Activated CD4-positive, alpha-beta T cell treated with anti-CD3 and anti-CD28 coated beads for 36 hours (primary cell): ENCODE measurements at regions of chr18 and their contacts with region 1.

Region 1: GRCh38 chr18:62982600-62983251 is 267.4 kb downstream of the PHLPP1 start:
- DNase-seq: peak; percentile 74
- ATAC-seq: peak; percentile 72
- H3K4me3 Mint-ChIP-seq: no peak overlapping the region
- H3K27ac Mint-ChIP-seq: no peak overlapping the region
- H3K4me1 Mint-ChIP-seq: peaks cover 3% of the 10 kb centered on the region
- H3K27me3 Mint-ChIP-seq: no peaks in the 10 kb centered on the region

Region 2: DNA sequence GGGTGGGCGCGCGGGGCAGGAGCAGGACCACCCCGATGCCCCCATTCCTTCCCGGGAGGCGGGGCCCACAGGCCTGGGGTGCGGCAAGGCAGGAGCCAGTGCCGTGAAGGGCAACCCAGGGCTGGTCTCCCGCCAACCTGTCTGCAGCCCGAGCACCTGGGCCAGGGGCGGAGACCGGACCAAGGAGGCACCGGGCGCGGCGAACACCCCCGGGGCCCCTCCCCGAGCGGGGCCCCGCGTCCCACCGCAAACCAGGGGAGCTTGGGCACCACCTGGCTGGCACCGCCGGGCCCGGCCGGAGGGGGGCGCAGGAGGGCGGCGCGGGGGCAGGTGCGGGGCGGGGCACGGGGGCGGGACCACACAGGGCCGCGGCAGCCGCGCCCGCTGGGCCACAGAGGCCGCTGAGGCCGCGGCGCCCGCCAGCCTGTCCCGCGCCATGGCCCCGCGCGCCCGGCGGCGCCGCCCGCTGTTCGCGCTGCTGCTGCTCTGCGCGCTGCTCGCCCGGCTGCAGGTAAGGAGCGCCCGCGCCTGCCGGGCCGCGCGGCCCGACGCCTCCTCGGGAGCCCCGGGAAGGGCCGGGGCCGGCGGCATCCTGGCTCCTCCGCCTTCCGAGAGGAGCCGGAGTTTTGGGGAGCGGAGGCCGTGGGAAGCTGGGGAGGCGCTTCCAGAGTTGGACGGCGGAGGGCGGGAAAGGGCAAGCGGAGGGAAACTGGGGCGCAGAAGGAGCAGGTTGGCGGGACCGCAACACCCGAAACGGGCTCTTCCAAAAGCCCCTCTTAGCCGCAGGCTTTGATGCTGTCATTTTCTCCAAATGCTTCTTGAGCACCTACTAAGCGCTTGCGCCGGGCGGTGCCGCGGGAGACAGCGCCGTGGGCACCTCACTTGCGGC is 657.6 kb before region 1 on chr18 and contains the start of gene TNFRSF11A:
- CTCF ChIA-PET with region 1: no interaction called
- POLR2A ChIA-PET with region 1: no interaction called
- intact Hi-C with region 1: loop called in 1 of 2 experiments (anchors 10 kb)
- DNase-seq: peak; percentile 85
- ATAC-seq: peak; percentile 77
- H3K4me3 Mint-ChIP-seq: peak within 1 kb of the TSS; percentile 78
- H3K27ac Mint-ChIP-seq: peak within 1 kb of the TSS; percentile 64
- H3K4me1 Mint-ChIP-seq: peaks cover 29% of the 10 kb centered on the region
- H3K27me3 Mint-ChIP-seq: peaks cover 70% of the 10 kb centered on the region
- total RNA-seq, gene TNFRSF11A: 6.9 to 9.3 TPM

Region 3: GRCh38 chr18:62452280-62452831 is 530.4 kb before region 1 on chr18:
- CTCF ChIA-PET with region 1: no interaction called
- POLR2A ChIA-PET with region 1: no interaction called
- intact Hi-C with region 1: no loop called
- DNase-seq: peak; percentile 58
- ATAC-seq: peak; percentile 78
- H3K4me3 Mint-ChIP-seq: no peak overlapping the region
- H3K27ac Mint-ChIP-seq: no peak overlapping the region
- H3K4me1 Mint-ChIP-seq: peaks cover 20% of the 10 kb centered on the region
- H3K27me3 Mint-ChIP-seq: peaks cover 9% of the 10 kb centered on the region

Region 4: GRCh38 chr18:62637807-62638687 is 344.7 kb before region 1 on chr18:
- CTCF ChIA-PET with region 1: interaction called, 31 read pairs
- POLR2A ChIA-PET with region 1: no interaction called
- intact Hi-C with region 1: loop called (anchors 1 kb)
- DNase-seq: peak; percentile 77
- ATAC-seq: peak; percentile 83
- H3K4me3 Mint-ChIP-seq: no peak overlapping the region
- H3K27ac Mint-ChIP-seq: no peak overlapping the region
- H3K4me1 Mint-ChIP-seq: peaks cover 4% of the 10 kb centered on the region
- H3K27me3 Mint-ChIP-seq: peaks cover 13% of the 10 kb centered on the region

Region 5: DNA sequence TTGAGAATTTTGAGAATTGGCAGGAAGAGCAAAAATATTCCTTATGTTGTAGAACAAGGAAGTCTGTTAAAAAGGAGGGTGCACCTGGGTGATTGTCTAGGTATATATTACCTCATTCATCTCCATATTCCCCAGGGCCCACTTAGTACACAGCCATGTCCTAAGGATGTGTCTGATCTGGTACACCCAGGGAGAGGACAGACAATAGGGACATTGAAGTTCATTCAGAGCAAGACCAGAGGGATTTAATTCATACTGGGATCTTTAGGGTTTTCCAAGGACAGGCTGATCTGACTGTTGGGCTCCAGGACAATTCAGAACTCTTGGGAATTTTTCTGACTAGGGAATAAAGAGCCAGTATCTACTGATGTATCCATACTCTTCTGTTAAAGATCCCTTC is 155.3 kb before region 1 on chr18:
- CTCF ChIA-PET with region 1: no interaction called
- POLR2A ChIA-PET with region 1: no interaction called
- intact Hi-C with region 1: no loop called
- DNase-seq: no peak
- ATAC-seq: no peak
- H3K4me3 Mint-ChIP-seq: no peak overlapping the region
- H3K27ac Mint-ChIP-seq: no peak overlapping the region
- H3K4me1 Mint-ChIP-seq: peaks cover 7% of the 10 kb centered on the region
- H3K27me3 Mint-ChIP-seq: no peaks in the 10 kb centered on the region

Region 6: DNA sequence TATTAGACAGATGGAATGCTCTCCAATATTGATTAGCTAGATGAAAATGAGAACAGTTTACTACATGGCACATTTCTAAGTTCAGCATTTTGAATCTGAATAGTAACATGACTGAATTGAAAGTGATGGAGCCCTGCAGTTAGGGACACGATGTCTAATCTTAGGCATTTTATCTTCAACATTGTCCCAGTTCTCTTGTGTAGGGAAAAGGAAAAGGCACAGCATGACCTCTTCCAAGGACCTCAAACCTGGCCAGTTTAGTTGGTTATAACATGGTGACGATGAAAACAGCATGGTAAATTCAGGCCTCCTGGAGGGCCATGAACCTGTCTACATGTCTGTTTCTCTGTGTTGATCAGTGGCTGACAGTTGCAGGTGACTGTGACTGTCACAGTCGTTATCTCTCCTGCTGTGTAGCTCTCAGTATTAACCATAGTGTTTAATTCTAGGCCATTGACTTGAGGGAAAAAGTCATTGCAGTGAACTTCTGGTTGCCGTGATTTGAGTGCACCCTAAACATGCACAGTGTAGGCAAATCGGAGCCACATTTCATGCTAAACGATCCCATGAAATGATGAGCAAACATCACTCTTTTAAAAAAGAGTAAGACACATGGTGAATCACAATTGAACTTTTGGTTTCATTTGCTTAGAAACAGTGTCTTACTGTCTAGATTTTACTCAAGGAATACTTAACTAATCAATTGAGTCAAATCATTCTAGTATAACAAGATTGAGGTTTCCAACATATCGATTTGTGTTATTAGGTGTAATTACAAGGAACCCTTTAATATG is 137.7 kb before region 1 on chr18:
- CTCF ChIA-PET with region 1: no interaction called
- POLR2A ChIA-PET with region 1: no interaction called
- intact Hi-C with region 1: no loop called
- DNase-seq: peak; percentile 63
- ATAC-seq: peak; percentile 90
- H3K4me3 Mint-ChIP-seq: peak overlapping the region; percentile 15
- H3K27ac Mint-ChIP-seq: peak overlapping the region; percentile 91
- H3K4me1 Mint-ChIP-seq: peaks cover 40% of the 10 kb centered on the region
- H3K27me3 Mint-ChIP-seq: no peaks in the 10 kb centered on the region

Region 7: GRCh38 chr18:62957885-62958472 is 24.7 kb before region 1 on chr18:
- CTCF ChIA-PET with region 1: interaction called, 10 read pairs
- POLR2A ChIA-PET with region 1: no interaction called
- intact Hi-C with region 1: no loop called
- DNase-seq: peak; percentile 74
- ATAC-seq: peak; percentile 84
- H3K4me3 Mint-ChIP-seq: no peak overlapping the region
- H3K27ac Mint-ChIP-seq: no peak overlapping the region
- H3K4me1 Mint-ChIP-seq: peaks cover 9% of the 10 kb centered on the region
- H3K27me3 Mint-ChIP-seq: no peaks in the 10 kb centered on the region

Region 8: DNA sequence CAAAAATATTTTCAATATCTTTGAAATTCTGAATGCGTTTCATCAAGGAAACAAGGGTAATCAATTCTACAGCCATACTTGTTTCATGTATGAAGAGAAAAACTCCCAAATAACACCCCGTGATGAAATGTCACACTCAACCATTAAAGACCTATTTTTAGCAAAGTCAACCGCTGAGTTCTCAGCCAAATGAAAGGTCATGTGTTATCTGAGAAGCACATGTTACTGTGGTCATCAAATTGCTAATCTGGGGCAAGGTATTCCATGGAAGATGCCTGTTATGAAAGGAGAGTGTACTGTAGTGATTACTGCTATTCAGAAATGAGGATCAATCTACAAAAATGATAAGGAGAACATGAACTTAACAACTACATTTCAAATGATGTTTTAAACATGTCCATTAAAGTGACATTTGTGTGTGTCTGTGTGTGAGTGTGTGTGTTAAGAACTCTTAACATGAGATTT is 210.2 kb after region 1 on chr18:
- CTCF ChIA-PET with region 1: no interaction called
- POLR2A ChIA-PET with region 1: no interaction called
- intact Hi-C with region 1: no loop called
- DNase-seq: no peak
- ATAC-seq: no peak
- H3K4me3 Mint-ChIP-seq: no peak overlapping the region
- H3K27ac Mint-ChIP-seq: peak overlapping the region; percentile 69
- H3K4me1 Mint-ChIP-seq: peaks cover 50% of the 10 kb centered on the region
- H3K27me3 Mint-ChIP-seq: no peaks in the 10 kb centered on the region